Posterior cingulate gyrus (tissue), 11 donors: ENCODE measurements at regions of chr9 and their contacts with region 1.

Region 1: DNA sequence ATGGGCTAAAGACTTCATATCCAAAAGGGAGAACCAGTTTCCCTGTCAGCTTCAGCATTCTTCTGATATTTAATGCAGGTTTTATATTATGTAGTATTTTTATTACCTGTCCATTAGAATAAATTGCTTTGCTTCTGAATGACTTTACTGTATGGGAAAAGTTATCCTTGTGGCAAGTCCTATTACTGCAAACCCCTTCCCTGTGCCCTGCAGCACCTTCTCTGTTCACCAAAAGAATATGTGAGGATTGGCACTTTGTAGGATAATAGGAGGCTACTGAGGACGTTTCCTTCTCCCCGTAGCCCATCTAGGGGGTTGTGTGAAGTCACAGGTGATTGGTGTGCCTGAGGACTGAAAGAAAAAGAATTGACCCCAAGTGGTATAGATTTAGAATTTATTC is 296.1 kb downstream of the KDM4C start:
- DNase-seq: no peak

Region 2: DNA sequence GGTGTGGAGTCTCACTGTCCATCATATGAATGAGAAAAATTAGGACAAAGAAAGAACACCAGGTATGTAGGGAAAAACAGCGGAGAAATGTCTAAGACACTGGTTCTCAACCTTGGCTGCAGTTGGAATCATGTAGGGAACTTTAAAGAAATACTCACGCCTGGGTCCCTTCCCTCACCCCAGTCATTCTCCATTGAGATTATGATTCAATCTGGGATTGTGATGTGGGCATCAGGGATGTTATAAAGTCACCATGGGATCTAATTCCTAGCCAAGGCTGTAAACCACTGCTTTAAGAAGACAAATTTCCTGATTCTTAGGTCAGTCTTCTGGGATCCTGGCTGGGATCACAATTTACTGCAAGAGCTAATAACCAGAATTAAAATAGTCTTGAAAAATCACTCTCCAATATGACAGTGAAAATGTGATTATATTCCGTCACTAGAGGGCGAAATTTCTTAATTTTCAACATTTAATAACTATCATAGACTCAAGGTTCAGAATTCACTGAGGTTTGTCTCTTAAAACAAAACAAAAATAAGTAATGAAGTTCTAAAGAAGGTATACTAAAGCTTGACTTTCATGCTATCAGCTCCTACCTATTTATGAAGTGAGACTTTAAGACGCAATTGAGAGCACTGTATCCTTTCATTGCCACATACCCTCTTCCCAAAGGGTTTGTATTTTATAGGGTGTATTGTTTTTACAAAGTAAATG is 468.9 kb before region 1 on chr9:
- intact Hi-C with region 1: no loop called
- DNase-seq: no peak

Region 3: DNA sequence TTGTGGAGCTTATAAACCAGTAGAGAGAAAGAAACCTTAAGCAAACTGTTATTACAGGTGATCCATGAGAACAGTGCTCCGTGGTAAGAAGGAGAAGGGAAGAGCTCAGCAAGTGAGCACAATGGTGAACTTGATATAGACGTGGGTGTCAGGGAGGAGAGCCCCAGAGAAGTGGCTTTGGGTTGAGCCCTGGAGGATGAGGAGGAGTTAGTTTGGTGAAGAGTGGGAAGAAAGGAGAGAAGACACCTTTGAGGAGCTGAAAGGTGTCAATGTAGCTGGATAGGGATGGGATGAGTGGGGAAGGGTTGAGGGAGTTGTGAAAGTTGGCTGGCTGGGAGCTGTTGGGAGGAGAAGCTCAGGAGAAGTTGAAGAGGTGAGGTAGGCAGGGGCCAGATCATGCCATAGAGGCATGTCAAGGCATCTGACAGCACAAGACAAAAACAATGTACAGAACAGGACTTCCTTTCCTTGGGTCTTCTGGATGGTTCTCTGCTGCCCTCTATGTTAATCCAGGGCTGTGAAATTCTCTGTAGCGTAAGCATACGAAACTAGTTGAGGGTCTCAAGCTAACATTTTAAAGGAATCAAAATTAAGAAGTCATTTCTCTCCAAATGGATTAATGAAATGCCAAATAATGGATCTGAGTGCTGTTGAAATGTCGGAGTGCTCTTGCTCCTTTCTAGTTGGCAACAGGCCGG is 205.8 kb after region 1 on chr9:
- intact Hi-C with region 1: loop called (anchors 5 kb)
- DNase-seq: peak in 1 of 10 donors; percentile 16